BJ (cell line): ENCODE measurements at regions of chr5 and their contacts with region 1.

Region 1: DNA sequence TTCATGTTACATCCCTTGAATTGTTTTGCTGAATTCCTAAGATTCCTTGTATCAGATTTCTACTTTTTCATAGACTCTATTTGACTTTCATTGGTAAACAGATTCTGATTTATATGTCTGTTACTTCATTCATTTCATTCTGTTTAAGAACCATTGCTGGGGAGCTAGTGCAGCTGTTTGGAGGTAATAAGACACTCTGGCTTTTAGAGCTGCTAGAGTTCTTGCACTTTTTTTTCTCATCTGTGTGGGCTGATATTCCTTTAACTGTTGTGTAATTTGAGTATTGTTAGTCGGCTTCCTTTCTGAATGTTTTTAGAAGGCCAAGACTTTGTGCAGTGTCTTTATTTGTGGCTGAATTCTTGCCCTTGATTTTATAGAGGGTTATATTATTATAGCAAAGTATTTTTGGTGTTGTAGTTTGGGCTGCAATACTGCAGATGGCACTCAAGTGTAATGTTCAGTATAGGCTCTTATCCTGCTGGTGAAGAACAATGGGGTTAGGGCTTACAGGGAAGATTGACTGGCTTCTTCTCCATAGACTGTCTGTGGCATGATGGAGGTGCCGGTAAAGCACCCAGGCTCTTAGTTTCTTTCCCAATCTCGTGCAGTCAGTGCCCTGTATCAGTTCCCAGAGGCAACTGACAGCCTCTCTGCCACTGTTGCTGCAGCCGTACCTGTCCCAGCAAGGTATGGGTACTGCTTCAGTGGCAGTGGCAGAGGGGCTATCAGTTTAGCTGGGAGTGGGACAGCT is 162.2 kb downstream of the OXCT1 start:
- DNase-seq: peak; percentile 19
- H3K4me3 ChIP-seq: no peak overlapping the region
- H3K27me3 ChIP-seq: no peaks in the 10 kb centered on the region
- CTCF ChIP-seq: peak; percentile 67

Region 2: DNA sequence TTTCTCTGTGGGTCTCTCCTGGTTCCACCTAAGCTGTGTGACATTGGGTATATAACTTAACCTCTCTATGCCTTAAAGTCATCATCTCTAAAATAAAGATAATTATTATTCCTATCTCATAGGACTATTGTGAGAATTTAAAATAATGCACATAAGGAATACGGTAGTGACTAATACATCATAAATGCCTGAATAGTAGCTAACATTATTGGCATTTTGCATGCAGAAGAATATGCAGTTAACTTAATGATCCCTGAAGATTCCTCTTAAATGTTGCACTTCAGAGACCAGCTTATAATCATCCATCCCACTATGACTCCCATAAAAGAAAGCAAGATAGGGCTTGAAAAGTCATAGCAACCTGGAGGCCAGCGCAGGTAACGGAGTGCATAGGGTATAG is 129.8 kb after region 1 on chr5:
- CTCF ChIA-PET with region 1: interaction called, 92 read pairs
- POLR2A ChIA-PET with region 1: no interaction called
- DNase-seq: no peak
- H3K4me3 ChIP-seq: no peak overlapping the region
- H3K27me3 ChIP-seq: no peaks in the 10 kb centered on the region
- CTCF ChIP-seq: no peak

Region 3: DNA sequence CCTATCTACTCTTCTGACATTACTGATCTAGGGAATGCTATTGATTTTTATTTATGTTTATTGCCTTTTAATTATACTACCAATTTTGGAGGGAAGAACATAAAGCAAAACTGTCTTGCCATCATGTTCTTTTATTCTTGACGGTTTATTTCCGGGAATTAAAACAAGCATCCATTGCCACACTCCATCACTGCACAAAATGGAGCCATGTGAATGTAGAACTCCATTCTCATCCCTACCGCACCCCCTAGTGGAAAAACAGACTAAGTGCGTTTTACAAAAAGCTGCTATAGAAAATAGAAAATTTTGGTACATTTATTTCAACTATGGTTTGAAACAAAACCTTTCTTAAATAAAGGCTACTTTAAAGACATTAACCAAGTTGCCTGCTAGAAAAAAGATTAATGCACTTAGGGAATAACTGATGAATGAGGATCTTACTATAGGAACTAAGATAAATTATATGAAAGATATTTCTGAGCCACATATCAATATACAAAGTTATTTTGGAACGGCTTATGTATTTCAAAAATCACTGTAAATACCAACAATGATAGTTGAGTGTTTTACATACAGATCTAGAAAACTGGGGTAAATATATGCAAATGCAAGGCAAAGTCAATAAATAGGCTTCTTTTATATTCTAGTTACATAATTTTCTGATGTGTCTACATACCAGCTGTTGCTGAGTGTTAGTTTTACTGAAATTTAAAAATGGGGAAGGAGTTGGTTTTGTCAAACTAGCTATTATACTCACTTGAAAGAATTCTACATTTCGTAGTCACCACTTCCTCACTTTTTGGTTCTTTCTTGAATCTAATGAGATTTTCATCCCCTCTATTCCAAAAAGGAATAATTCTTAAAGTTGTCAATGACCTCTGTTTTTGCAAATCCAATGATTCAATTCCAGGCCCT is 135.7 kb after region 1 on chr5:
- CTCF ChIA-PET with region 1: interaction called, 92 read pairs
- POLR2A ChIA-PET with region 1: no interaction called
- DNase-seq: no peak
- H3K4me3 ChIP-seq: no peak overlapping the region
- H3K27me3 ChIP-seq: no peaks in the 10 kb centered on the region
- CTCF ChIP-seq: peak; percentile 76